ENCODE measurements at regions of chr17 and their contacts with region 1.

Region 1: DNA sequence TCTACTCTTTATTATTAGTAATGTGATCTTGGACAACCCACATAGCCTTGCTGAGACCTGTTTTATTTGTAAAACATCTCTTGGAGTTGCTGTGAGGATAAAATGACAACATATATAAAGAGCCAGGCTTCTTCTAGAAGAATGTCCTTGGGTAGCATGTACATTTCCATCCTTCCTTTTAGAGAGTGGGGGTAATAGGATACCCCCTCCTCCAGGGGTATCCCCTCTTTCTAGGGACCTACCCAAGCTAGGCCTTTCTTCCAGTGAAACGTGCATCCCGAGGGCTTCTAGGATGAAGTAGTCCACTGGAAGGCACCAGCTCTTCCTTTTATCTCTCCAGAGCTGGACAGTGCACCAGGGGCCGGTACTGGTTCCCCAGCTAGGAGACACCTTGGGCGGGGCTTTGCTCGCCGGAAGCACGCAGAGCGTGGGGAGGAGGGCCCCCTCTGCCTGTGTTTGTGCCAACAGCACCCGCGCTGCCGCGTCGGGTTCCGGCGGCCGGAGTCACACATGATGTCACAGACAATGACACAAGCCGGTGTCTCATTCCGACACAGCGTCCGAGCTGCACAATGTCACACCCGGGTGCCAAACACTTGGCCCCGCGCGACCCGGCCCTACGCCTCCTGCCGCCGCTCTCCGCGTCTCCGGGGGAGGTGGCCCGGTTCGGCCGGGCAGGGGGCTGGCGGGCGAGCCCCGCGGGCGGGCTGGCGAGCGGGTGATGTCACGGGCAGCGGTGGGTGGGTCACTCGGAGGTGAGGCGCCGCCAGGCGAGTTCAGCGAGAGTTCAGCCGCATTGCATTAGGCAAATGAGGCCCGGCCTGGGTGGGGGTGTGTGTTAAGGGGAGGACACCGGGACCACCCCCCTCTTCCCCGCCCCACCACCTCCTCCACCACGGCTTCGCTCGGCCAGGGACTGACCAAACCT is 23.4 kb downstream of the GJD3 start:
- DNase-seq: no peak
- H3K4me3 ChIP-seq: peak overlapping the region; percentile 62
- CTCF ChIP-seq: no peak

Region 2: GRCh38 chr17:40355123-40355803 is 14.1 kb after region 1 on chr17:
- CTCF ChIA-PET with region 1: interaction called, 79 read pairs
- POLR2A ChIA-PET with region 1: interaction called, 3 read pairs
- DNase-seq: no peak
- H3K4me3 ChIP-seq: no peak overlapping the region
- CTCF ChIP-seq: peak; percentile 98

Region 3: GRCh38 chr17:40371261-40371929 is 30.3 kb after region 1 on chr17:
- CTCF ChIA-PET with region 1: no interaction called
- POLR2A ChIA-PET with region 1: no interaction called
- DNase-seq: no peak
- H3K4me3 ChIP-seq: no peak overlapping the region
- CTCF ChIP-seq: no peak

Measured in AG04449 (cell line).